ENCODE measurements at regions of chr10 and their contacts with region 1.

Region 1: GRCh38 chr10:62437696-62438095 is 63.5 kb downstream of the ZNF365 start:
- DNase-seq: peak; percentile 69
- H3K4me3 ChIP-seq: no peak overlapping the region
- CTCF ChIP-seq: peak; percentile 45

Region 2: DNA sequence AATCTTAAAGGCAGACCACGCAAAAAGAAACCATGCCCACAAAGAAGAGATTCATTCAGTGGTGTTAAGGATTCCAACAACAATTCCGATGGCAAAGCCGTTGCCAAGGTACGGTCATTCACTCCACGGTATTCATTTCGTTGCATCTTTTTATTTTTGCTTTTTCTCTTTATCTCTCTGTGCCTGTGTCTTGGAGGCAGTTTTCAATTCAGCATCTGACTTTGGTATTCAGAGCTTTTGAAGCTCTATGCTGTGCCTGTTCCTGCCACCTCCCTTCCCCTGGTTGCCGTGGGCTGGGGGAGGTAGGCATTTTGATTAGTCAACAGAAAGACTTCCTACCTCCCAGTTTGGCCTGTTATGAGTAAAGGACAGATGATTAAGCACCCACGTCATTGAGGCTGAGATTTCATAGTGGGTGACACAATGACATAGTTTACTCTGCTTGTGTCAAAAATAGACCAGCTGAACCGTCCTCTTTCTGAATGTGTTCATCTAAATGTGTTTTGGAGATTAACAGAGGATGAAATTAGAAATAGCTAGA is 386.7 kb before region 1 on chr10:
- CTCF ChIA-PET with region 1: no interaction called
- POLR2A ChIA-PET with region 1: no interaction called
- DNase-seq: peak; percentile 80
- H3K4me3 ChIP-seq: peak overlapping the region; percentile 67
- CTCF ChIP-seq: no peak

Region 3: DNA sequence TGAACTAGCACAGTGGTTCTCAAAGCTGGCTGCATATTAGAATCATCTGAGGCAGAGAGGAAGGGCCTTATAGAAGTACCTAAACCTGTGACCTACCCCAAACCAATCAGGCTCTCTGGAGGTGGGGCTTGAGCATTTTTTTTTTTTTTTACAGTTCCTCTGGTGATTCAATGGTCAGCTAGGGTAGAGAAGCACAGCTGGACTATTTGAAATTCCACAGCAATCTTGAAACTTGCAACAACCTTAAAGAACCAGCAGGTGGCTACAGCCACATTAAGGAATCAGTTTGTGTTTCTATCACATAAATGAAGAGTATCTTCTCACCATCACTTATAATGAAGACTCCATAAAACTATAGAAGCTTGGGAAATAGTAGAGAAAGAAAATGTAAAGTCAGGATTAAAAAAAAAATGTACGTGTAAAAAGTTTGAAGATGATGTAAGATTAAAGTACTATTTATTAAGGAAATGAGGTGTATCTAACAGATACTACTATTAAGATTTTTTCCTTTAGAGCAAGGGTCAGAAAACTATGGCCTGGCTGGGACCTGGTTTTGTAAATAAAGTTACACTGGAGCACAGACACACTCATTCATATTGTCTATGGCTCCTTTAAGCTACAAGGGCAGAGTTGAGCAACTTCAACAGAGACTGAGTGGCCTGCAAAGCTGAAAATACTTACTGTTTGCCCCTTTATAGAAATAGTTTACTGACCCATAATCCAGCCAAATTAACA is 172.8 kb before region 1 on chr10:
- CTCF ChIA-PET with region 1: interaction called, 40 read pairs
- POLR2A ChIA-PET with region 1: no interaction called
- DNase-seq: peak; percentile 69
- H3K4me3 ChIP-seq: no peak overlapping the region
- CTCF ChIP-seq: peak; percentile 55

Region 4: DNA sequence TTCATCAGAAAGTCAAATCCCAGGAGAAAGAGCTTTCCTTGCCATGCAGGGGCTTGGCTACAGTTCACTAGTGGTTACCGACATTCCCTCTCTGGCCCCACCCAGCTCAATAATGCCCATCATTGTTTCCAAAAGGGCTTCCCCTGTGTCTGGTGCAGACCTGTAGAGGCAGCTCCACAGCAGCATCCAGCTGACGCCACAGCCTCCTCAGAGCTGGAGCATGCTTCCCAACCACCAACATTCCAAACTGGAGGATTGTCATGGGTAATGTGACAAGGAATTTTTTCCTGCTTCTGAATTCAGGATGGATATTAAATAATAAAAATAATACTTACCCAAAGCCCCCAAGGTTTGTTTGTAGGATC is 13.9 kb after region 1 on chr10:
- CTCF ChIA-PET with region 1: interaction called, 74 read pairs
- POLR2A ChIA-PET with region 1: interaction called, 3 read pairs
- DNase-seq: no peak
- H3K4me3 ChIP-seq: no peak overlapping the region
- CTCF ChIP-seq: no peak

Region 5: GRCh38 chr10:62554632-62555199 is 117.0 kb after region 1 on chr10:
- CTCF ChIA-PET with region 1: interaction called, 10 read pairs
- POLR2A ChIA-PET with region 1: no interaction called
- DNase-seq: peak; percentile 34
- H3K4me3 ChIP-seq: no peak overlapping the region
- CTCF ChIP-seq: peak; percentile 57

Region 6: DNA sequence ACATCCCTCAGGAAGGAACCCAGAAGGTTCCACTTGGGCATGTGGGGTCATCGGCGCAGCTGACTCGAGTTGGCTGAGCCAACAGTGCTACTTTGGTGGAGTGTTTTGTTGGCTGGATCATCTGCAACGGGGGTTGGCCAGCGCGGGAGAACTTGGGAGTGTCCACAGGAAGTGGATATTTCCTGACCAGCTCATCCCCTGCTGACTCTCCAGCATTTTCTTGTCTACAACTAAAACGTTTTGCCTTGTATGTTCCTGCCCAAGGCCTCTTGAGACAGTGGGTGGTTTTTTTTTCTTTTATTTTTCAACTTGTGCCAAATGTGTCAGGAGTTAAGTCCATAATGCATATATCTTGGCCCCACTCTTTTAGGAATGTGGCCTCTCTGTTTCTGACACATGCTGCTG is 145.1 kb after region 1 on chr10:
- CTCF ChIA-PET with region 1: interaction called, 16 read pairs
- POLR2A ChIA-PET with region 1: interaction called, 5 read pairs
- DNase-seq: peak; percentile 99
- H3K4me3 ChIP-seq: no peak overlapping the region
- CTCF ChIP-seq: no peak

Region 7: GRCh38 chr10:62816331-62817120 is 378.8 kb after region 1 on chr10 and contains the start of gene EGR2:
- CTCF ChIA-PET with region 1: interaction called, 19 read pairs
- POLR2A ChIA-PET with region 1: no interaction called
- DNase-seq: peak; percentile 61
- H3K4me3 ChIP-seq: peak within 1 kb of the TSS; percentile 65
- CTCF ChIP-seq: no peak

Region 8: GRCh38 chr10:63157845-63158624 is 720.3 kb after region 1 on chr10:
- CTCF ChIA-PET with region 1: interaction called, 27 read pairs
- POLR2A ChIA-PET with region 1: no interaction called
- DNase-seq: peak; percentile 71
- H3K4me3 ChIP-seq: no peak overlapping the region
- CTCF ChIP-seq: peak; percentile 61

Measured in AG04449 (cell line).